Common myeloid progenitor, CD34-positive (primary cell): ENCODE measurements at regions of chr5 and their contacts with region 1.

Region 1: DNA sequence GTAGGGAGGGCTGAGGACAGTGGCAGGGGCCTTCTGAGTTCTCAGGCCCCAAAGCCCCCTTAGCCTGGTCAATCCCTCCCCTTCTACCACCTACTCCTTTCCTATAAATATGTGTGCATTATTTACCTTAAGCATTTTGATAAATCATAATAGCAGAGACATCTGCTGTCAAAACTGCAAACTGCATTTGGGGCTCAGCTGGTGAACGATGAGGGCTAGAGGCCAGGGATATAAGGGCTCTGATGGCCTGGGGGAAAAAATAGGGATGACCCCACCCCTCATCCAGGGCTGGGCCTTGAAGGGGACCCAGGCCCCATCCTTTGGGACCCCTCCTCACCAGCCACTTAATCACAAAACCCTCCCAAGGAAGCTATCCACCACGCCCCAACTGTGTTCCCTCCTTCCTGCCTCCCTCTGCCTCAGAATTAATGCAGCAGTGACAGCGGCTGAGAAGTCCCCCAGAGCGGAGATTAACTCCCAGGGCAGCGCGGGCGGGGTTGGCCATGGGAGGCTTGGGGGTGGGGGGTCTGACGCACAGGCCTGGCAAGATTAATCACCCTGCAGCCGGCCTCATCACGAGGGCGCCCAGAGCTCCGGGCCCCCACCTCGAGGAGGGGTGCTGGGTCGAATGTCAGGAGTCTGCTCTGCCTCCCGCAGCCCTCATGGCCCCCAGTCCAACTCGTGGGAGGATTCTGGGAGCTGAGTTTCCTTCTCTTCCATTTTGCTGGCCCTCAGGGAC is 42.1 kb downstream of the CXXC5 start:
- DNase-seq: peak in 2 of 3 donors; percentile 63 to 64
- H3K4me3 ChIP-seq: peak overlapping the region in 2 of 7 experiments; percentile 36 to 61
- H3K27ac ChIP-seq: peak overlapping the region in 1 of 2 experiments; percentile 32
- H3K4me1 ChIP-seq: peaks cover 0 to 79% (median 45%) of the 10 kb centered on the region in 4 experiments
- H3K27me3 ChIP-seq: no peaks in the 10 kb centered on the region

Region 2: DNA sequence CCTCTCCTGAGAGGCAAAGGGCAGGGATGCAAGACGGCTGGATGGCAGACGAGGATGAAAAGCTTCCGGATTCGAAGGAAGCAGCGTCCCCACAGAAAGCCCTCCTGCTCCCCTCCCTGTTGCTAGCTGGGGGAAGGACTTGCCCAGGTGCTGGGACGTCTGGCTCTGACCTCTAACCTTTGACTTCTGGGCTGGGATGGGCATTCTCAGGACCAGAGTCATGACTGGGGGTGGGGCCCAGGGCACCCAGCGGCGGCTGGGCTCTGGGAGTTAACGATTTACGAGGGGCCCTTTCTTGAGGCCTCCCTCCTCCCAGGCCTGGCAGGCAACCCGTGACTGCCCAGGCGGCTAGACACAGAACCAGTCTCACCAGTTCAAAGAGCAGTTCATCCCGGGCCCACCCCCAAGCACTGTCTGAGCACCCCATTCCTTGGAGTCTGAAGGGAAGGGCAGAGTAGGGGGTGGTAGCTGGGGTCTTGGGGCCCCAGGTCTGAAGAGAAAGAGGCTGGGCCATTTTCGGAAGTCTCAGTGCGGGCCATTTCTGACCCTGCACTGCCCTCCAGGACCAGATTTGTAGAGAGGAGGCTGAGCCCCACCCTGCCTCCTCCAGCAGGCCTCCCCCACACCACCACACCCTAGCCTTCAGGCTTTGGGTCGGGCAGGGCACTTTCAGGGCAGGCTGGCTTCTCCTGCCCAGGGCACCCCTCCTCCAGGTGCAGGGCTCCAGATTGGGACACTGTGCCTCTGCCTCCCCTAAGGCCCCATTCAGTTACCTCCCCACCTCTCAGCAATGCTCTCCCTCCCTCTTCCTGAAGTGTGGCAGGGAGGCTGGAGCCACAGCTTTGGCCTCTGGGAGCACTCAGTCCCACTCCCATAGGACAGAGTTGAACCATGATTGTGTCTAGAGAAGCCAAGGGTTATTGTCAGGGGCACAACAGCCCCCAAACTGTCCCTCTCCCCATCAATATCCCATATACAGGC is 47.1 kb before region 1 on chr5:
- CTCF ChIA-PET with region 1: interaction called, 211 read pairs
- POLR2A ChIA-PET with region 1: interaction called, 9 read pairs
- DNase-seq: no peak
- H3K4me3 ChIP-seq: no peak overlapping the region
- H3K27ac ChIP-seq: no peak overlapping the region
- H3K4me1 ChIP-seq: peaks cover 2 to 80% (median 50%) of the 10 kb centered on the region in 4 experiments
- H3K27me3 ChIP-seq: no peaks in the 10 kb centered on the region

Region 3: DNA sequence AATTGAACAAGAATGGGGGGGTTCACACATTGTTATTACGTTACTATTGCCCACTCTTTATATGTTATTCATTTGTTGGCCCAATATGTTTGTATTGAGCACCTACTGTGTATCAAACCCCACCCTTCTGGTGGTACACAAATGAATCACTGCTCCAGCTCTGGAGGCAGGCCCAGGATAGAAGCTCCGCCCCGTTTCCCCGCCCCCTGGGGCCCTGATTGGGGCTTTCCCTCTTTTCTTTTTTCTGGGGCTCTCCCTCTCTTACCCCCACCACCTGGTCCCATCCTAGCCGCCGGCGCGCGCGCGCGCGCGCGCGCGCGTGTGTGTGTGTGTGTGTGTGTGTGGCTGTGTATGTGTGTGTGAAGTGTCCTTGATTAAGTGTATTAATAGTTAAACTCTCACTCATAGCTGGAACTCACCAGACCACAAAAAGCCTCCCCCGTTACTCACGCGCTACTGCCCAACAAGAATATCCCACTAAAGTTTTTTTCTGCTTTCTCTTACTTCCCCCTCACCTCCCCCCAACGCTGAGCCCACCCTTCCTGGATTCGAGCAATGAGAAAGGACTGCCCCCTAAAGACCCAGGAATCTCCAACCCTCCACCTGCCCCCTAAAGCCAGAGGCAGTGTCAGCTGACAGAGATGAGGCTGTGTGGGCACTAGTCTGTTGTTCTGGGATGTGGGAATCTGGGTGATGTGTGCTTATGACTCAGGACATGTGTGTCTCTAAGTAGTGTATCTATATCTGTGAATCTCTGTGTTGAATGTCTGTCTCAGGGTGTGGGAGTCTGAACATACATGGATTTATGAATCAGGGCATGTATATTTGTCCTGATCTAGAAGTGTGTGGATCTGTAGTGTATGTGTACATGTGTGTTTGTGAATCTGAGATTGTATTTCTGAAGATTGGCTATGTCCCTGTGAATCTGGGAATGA is 38.1 kb before region 1 on chr5:
- CTCF ChIA-PET with region 1: interaction called, 357 read pairs
- POLR2A ChIA-PET with region 1: interaction called, 9 read pairs
- DNase-seq: peak in 2 of 3 donors; percentile 72 to 78
- H3K4me3 ChIP-seq: peak overlapping the region in 6 of 7 experiments; percentile 27 to 95 (median 49)
- H3K27ac ChIP-seq: peak overlapping the region in 1 of 2 experiments; percentile 65
- H3K4me1 ChIP-seq: peaks cover 15 to 74% (median 71%) of the 10 kb centered on the region in 4 experiments
- H3K27me3 ChIP-seq: no peaks in the 10 kb centered on the region